Dendritic cell treated with granulocyte-macrophage colony-stimulating factor and Interleukin-4, amounts not matched to agents 40 ng/mL and 50 ng/mL, for 4 days (primary cell): ENCODE measurements at regions of chr9 and their contacts with region 1.

Region 1: DNA sequence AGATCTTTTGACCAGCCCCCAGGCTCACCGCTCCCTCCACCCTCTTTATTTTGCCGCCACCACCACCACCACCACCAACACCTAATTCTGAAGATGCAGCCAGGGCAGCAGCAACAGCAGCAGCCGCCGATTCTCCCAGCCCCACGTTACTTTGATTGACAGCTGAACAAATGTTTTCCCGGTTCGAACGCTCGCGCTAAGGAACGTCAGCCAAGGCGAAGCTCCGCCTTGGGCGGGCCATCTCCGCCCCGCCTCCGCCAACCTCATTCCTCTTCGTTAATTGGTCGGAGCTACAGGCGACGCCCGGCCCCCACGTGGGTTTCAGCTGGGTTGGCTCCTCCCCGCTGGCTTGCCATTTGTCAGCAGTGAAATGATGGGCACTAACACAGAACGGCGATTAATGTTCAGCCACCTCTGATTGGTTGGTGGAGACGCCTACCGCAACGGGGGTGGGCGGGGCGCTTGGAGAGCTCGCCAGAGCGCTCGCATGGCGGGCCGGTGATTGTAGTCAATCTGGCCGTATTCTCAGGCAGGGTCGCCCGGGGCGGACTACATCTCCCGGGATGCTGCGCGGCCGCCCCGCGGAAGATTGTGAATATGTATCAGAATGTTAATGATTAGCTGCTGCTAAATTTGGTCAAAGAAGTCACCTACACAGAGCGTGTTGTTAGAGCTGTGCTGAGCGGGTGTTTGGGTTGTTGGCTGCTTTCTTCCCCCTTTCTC is at the start of gene TLE4:
- H3K4me3 Mint-ChIP-seq: peak within 1 kb of the TSS; percentile 84
- H3K27ac Mint-ChIP-seq: no peak within 1 kb of the TSS
- H3K4me1 Mint-ChIP-seq: peaks cover 39% of the 10 kb centered on the region
- H3K27me3 Mint-ChIP-seq: peaks cover 11% of the 10 kb centered on the region

Region 2: DNA sequence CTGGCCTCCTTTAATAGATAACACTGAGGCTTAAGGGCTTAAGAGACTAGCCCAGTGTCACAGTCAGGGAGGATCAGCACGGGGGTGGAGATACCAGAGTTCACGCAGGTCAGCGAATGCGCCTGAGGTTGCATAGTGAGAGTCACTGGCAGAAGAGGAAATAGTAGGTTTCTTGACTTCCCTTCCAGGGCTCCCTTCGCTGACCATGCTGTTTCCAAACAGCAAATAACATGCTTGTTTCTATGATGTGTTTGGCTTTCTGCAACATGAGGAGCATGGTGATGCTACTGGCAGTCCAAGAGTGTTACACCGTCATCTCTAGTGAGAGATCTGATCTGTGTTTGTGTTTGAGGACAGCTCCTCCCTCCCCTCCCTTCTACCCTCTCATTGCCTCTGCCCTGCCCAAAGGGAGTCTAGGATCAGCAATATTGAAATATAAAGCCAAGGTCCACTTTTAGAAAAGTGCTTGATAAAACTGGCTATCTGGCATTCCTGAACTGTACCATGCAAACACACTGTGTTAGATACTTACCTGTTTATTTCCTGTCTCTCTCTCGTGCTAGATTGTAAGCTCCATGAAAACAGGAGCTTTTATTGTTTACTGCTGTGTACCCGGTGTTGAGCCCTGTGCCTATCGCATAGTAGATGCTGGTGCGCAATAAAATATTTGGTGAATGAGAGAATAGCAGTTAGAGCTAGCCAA is 12.6 kb after region 1 on chr9:
- intact Hi-C with region 1: loop called (anchors 2 kb)
- H3K4me3 Mint-ChIP-seq: peak overlapping the region; percentile 34
- H3K27ac Mint-ChIP-seq: peak overlapping the region; percentile 83
- H3K4me1 Mint-ChIP-seq: peaks cover 76% of the 10 kb centered on the region
- H3K27me3 Mint-ChIP-seq: no peaks in the 10 kb centered on the region

Region 3: GRCh38 chr9:79610791-79611614 is 39.5 kb after region 1 on chr9:
- intact Hi-C with region 1: loop called (anchors 5 kb)
- H3K4me3 Mint-ChIP-seq: peak overlapping the region; percentile 14
- H3K27ac Mint-ChIP-seq: peak overlapping the region; percentile 74
- H3K4me1 Mint-ChIP-seq: peaks cover 55% of the 10 kb centered on the region
- H3K27me3 Mint-ChIP-seq: no peaks in the 10 kb centered on the region

Region 4: GRCh38 chr9:79667749-79668454 is 96.4 kb after region 1 on chr9:
- intact Hi-C with region 1: loop called (anchors 5 kb)
- H3K4me3 Mint-ChIP-seq: no peak overlapping the region
- H3K27ac Mint-ChIP-seq: peak overlapping the region; percentile 65
- H3K4me1 Mint-ChIP-seq: peaks cover 61% of the 10 kb centered on the region
- H3K27me3 Mint-ChIP-seq: no peaks in the 10 kb centered on the region

Region 5: DNA sequence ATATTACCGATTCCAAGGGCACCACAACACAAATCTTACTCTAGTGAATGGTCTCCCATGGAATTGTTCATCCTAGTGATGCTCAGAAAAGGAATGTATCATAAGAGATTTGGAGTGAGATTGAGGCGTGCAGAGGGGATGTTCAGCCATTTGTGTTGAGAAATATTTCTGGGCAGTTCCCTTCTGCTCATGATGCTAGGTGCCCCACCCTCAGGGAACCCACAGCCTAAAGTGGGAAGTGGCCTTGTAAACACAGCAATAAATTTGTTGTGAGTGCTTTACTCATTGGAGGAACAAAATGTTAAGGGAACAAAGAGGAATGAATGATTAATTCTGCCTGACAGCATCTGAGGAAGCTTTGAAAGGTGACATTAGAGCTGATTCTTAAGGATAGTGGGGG is 130.2 kb after region 1 on chr9:
- intact Hi-C with region 1: loop called (anchors 2 kb)
- H3K4me3 Mint-ChIP-seq: no peak overlapping the region
- H3K27ac Mint-ChIP-seq: peak overlapping the region; percentile 84
- H3K4me1 Mint-ChIP-seq: peaks cover 52% of the 10 kb centered on the region
- H3K27me3 Mint-ChIP-seq: no peaks in the 10 kb centered on the region

Region 6: DNA sequence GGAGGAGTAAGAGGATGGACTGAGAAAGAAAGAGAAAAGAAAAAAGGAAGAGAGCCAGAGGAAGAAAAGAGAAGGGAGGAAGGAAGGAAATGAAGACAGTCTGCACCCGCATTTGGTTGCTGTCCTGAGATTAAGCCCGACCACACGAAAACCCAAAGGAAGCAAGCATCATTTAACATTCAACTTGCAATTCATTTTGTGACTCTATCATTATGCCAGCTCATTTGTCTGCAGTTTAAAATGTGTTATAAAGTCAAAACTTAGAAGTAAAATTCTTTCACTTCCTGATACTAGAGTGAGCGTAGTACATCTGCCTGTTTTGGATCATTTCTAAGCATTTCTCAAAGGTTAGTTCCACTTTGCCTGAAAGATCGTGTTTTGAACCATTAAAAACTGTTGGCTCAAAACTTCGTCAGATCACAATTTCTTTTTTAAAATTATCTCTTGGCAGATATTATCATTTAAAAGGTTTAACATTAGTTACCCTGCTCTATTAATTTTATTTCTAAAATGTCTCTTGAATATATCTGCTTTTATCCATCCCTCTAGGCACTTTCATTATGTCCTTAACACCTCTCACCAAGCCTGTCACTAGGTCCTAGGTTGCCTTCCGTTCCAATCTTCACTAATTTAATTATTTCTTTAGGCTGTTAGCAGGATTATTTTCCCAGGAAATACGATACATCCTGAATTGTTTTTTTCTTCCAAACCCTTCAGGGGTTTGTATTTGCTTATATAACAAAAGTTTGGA is 241.2 kb after region 1 on chr9:
- intact Hi-C with region 1: loop called (anchors 5 kb)
- H3K4me3 Mint-ChIP-seq: peak overlapping the region; percentile 58
- H3K27ac Mint-ChIP-seq: peak overlapping the region; percentile 75
- H3K4me1 Mint-ChIP-seq: peaks cover 18% of the 10 kb centered on the region
- H3K27me3 Mint-ChIP-seq: peaks cover 2% of the 10 kb centered on the region